MCF 10A (cell line): ENCODE measurements at regions of chr5 and their contacts with region 1.

Region 1: GRCh38 chr5:91383027-91383955 is at the start of gene ARRDC3:
- DNase-seq: peak; percentile 96
- H3K4me3 Mint-ChIP-seq: peak within 1 kb of the TSS; percentile 80
- H3K27ac Mint-ChIP-seq: peak within 1 kb of the TSS; percentile 99
- H3K4me1 Mint-ChIP-seq: no peaks in the 10 kb centered on the region
- H3K27me3 Mint-ChIP-seq: no peaks in the 10 kb centered on the region
- CTCF ChIP-seq: no peak
- total RNA-seq, gene ARRDC3: 35.5 and 41.6 TPM in 2 replicates

Region 2: DNA sequence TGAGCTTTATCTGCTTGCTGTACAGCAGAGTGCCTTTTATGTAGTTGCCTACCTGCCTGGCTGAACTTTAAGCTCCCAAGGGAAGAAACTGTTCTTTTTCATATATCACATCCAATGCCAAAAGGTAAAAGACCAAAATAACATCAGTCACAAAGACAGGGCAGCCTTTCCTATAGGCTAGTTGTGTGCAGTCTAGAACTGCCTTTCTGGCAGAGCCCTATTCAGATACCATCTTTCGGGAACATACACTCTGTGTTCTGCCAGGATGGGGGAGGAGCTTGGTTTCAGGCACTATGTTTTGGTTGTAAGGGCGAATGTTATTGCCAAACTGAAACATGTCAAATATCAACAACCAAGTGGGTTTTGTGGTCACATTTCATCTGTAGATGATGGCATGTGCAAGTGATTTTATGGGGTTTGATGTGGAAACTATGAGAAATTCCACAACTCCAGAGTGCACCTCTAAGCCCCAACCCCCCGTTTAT is 510.2 kb before region 1 on chr5:
- CTCF ChIA-PET with region 1: interaction called, 175 read pairs
- POLR2A ChIA-PET with region 1: interaction called, 45 read pairs
- intact Hi-C with region 1: no loop called
- DNase-seq: peak; percentile 44
- H3K4me3 Mint-ChIP-seq: no peak overlapping the region
- H3K27ac Mint-ChIP-seq: peak overlapping the region; percentile 28
- H3K4me1 Mint-ChIP-seq: peaks cover 14% of the 10 kb centered on the region
- H3K27me3 Mint-ChIP-seq: no peaks in the 10 kb centered on the region
- CTCF ChIP-seq: no peak

Region 3: GRCh38 chr5:91016954-91017700 is 366.2 kb before region 1 on chr5:
- CTCF ChIA-PET with region 1: interaction called, 3 read pairs
- POLR2A ChIA-PET with region 1: interaction called, 34 read pairs
- intact Hi-C with region 1: no loop called
- DNase-seq: peak; percentile 87
- H3K4me3 Mint-ChIP-seq: peak overlapping the region; percentile 59
- H3K27ac Mint-ChIP-seq: peak overlapping the region; percentile 55
- H3K4me1 Mint-ChIP-seq: peaks cover 26% of the 10 kb centered on the region
- H3K27me3 Mint-ChIP-seq: no peaks in the 10 kb centered on the region
- CTCF ChIP-seq: no peak

Region 4: DNA sequence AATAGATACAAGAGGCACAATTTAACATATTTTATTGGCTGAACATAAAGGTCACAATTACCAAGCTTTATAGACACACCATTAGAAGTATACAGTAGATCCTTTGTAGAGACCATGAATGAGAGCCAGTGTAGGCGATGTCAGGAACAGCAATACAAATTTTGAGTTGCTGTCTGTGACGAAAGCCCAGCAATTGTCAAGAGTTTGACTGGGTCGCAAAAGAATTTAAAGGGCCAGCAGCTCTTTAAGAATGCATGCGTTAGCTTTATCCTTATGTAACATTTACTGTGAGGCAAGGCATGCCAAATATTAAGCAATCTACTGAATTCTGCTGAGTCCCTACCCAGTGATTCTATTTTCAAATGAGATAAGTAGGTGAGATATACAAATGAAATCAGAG is 237.1 kb before region 1 on chr5:
- CTCF ChIA-PET with region 1: interaction called, 5 read pairs
- POLR2A ChIA-PET with region 1: interaction called, 17 read pairs
- intact Hi-C with region 1: no loop called
- DNase-seq: peak; percentile 70
- H3K4me3 Mint-ChIP-seq: no peak overlapping the region
- H3K27ac Mint-ChIP-seq: no peak overlapping the region
- H3K4me1 Mint-ChIP-seq: peaks cover 12% of the 10 kb centered on the region
- H3K27me3 Mint-ChIP-seq: no peaks in the 10 kb centered on the region
- CTCF ChIP-seq: no peak

Region 5: GRCh38 chr5:91245871-91246270 is 137.4 kb before region 1 on chr5:
- CTCF ChIA-PET with region 1: interaction called, 3 read pairs
- POLR2A ChIA-PET with region 1: interaction called, 3 read pairs
- intact Hi-C with region 1: loop called (anchors 1 kb)
- DNase-seq: peak; percentile 2
- H3K4me3 Mint-ChIP-seq: no peak overlapping the region
- H3K27ac Mint-ChIP-seq: no peak overlapping the region
- H3K4me1 Mint-ChIP-seq: no peaks in the 10 kb centered on the region
- H3K27me3 Mint-ChIP-seq: no peaks in the 10 kb centered on the region
- CTCF ChIP-seq: no peak

Region 6: DNA sequence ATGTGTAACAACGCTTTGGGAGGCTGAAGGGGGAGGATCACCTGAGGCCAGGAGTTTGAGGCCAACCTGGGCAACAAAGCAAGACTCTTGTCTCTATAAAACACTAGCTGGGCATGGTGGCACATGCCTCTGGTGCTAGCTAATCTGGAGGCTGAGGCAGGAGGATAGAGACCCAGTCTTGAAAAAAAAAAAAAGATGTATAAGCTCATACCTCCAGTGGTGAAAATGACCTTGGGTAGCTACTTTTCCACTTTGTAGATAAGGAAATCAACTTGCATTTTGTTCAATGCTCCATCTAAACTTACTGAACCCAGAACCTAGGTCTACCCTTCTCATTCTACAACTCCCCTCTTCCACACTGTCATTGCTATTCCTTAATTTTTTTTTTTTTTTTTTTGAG is 16.7 kb before region 1 on chr5:
- CTCF ChIA-PET with region 1: interaction called, 6 read pairs
- POLR2A ChIA-PET with region 1: interaction called, 69 read pairs
- intact Hi-C with region 1: no loop called
- DNase-seq: no peak
- H3K4me3 Mint-ChIP-seq: no peak overlapping the region
- H3K27ac Mint-ChIP-seq: no peak overlapping the region
- H3K4me1 Mint-ChIP-seq: peaks cover 1% of the 10 kb centered on the region
- H3K27me3 Mint-ChIP-seq: no peaks in the 10 kb centered on the region
- CTCF ChIP-seq: no peak